ENCODE measurements at regions of chr9 and their contacts with region 1.

Region 1: GRCh38 chr9:95268681-95269080 is 48.8 kb downstream of the FANCC start:
- DNase-seq: peak in 1 of 3 donors; percentile 28
- ATAC-seq: peak; percentile 37 to 57 (median 46)
- H3K4me3 ChIP-seq: no peak overlapping the region
- H3K27ac ChIP-seq: no peak overlapping the region
- H3K4me1 ChIP-seq: peaks cover 0 to 34% (median 5%) of the 10 kb centered on the region in 4 donors
- H3K27me3 ChIP-seq: no peaks in the 10 kb centered on the region
- CTCF ChIP-seq: peak; percentile 15 to 44 (median 26)
- POLR2A ChIP-seq: no peak

Region 2: GRCh38 chr9:95336281-95336680 is 67.6 kb after region 1 on chr9:
- intact Hi-C with region 1: loop called in 1 of 2 experiments (anchors 10 kb)
- DNase-seq: peak; percentile 43 to 64 (median 61)
- ATAC-seq: peak; percentile 91 to 95 (median 94)
- H3K4me3 ChIP-seq: no peak overlapping the region
- H3K27ac ChIP-seq: no peak overlapping the region
- H3K4me1 ChIP-seq: peaks cover 0 to 3% (median 0%) of the 10 kb centered on the region in 4 donors
- H3K27me3 ChIP-seq: no peaks in the 10 kb centered on the region
- CTCF ChIP-seq: peak; percentile 65 to 91 (median 80)
- POLR2A ChIP-seq: no peak

Measured in right lobe of liver (tissue), 6 donors.